ENCODE measurements at regions of chr5 and their contacts with region 1.

Region 1: DNA sequence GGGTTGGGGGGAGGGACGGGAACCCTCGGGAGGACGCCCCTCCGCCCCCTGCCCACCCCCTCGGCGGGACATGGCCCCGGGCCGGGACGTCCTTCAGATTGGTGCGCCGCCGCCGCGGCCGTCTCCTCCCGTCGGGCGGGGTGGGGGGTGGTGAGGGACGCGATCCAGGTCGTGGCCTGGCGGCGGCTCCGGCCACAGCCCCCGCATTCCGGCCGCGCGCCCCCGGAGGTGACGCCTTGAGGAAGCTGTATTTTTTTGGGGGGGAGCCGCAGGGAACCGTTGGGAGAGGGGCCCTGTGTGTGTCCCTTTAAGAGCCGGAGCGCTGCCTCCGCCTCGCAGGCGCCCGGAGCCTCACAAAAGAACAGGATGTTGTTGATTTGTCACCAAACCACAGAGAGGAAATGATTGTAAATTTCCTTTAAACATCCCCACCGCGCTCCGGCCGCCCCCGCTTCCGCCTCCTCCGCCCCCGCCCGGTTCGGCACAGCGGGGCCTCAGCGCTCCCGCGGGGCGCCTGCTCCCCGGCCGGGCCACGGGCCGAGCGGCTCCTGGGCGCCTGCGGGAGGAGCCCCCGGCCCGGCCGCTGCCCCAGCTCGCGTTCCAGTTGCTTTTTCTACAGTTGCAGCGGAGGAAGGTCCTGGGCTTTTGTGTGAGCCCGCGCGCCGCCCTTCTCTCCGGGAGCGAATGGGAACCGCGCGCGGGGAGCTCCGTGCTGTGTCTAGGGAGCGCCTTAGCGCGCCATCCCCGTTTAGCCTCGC is 32.1 kb upstream of the SPRY4 start:
- DNase-seq: peak; percentile 86 to 91
- ATAC-seq: peak; percentile 83 to 92 (median 90)
- H3K4me3 ChIP-seq: peak overlapping the region; percentile 68
- H3K4me3 Mint-ChIP-seq: peak overlapping the region; percentile 95
- H3K27ac ChIP-seq: peak overlapping the region; percentile 88
- H3K27ac Mint-ChIP-seq: peak overlapping the region; percentile 90 to 93
- H3K4me1 ChIP-seq: peaks cover 24% of the 10 kb centered on the region
- H3K4me1 Mint-ChIP-seq: peaks cover 13 to 33% of the 10 kb centered on the region in 2 donors
- H3K27me3 ChIP-seq: no peaks in the 10 kb centered on the region
- H3K27me3 Mint-ChIP-seq: no peaks in the 10 kb centered on the region
- CTCF ChIP-seq: no peak

Region 2: DNA sequence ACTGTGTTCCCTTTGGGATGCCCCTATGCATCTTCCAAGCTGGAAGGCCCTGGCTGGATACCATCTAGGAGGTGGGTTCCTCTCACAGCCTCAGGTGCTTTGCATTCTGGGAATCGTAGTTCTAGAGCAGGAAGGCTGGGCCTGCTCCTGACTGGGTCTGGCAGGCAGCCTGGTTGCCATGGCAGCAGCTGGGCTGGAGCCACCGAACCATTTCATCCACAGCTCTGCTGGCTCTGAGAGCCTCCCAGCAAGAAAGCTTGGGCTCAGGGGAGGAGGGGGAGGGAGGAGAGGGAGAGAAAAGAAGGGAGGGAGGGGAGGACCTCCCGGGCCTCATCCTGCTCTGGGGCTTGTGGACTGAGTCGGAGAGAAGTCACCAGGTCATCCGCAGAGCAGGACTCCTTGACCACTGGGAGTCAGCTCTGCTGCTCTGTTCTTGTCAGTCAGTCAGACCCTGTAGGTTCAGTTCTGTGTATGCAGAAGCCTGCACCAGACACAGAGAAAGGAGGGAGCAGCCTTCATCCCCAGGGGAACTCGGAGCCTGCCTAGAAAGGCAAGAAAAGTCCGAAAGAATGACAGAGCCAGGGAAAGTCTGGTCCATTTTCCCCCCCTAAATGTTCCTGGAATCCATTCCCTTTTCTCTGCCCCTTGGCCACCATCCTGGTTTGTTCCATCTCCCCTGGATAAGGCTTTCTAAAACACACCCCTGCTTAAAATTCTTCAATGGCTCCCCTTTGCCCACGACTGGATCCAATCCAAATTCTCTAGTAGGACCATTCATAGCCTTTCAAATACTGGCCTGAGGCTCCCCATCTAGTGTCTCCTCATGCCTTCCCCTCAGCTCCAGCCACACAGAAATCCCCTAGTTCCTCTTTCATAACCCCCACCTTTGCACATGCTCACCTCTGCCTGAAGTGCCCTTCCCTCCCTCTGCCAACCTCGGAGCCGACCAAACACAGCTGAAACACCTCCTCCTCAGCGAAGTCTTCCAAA is 609.4 kb before region 1 on chr5:
- intact Hi-C with region 1: no loop called
- DNase-seq: no peak
- ATAC-seq: no peak
- H3K4me3 ChIP-seq: no peak overlapping the region
- H3K4me3 Mint-ChIP-seq: no peak overlapping the region
- H3K27ac ChIP-seq: no peak overlapping the region
- H3K27ac Mint-ChIP-seq: no peak overlapping the region
- H3K4me1 ChIP-seq: no peaks in the 10 kb centered on the region
- H3K4me1 Mint-ChIP-seq: no peaks in the 10 kb centered on the region
- H3K27me3 ChIP-seq: peaks cover 7% of the 10 kb centered on the region
- H3K27me3 Mint-ChIP-seq: peaks cover 47 to 53% of the 10 kb centered on the region in 2 donors
- CTCF ChIP-seq: no peak

Region 3: DNA sequence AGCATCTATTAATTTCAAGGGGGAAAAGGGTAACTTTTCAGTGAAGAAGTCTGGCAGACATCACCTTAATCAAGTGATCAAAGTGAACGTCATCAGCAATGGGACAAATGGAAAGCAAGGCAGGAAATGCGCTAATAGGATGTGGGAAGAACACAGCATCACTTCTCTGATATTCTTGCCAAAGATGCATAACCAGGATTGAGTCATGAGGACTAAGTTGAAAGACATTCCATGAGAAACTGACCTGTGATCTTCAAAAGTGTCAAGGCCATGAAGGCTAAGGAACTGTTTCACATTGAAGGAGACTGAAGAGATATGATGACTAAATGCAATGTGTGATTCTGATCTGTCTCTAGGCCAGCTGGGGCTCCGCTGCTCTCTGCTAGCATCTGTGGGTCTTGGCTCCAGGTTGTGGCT is 155.4 kb before region 1 on chr5:
- intact Hi-C with region 1: no loop called
- DNase-seq: no peak
- ATAC-seq: no peak
- H3K4me3 ChIP-seq: no peak overlapping the region
- H3K4me3 Mint-ChIP-seq: no peak overlapping the region
- H3K27ac ChIP-seq: no peak overlapping the region
- H3K27ac Mint-ChIP-seq: no peak overlapping the region
- H3K4me1 ChIP-seq: no peaks in the 10 kb centered on the region
- H3K4me1 Mint-ChIP-seq: no peaks in the 10 kb centered on the region
- H3K27me3 ChIP-seq: no peaks in the 10 kb centered on the region
- H3K27me3 Mint-ChIP-seq: peaks cover 7% of the 10 kb centered on the region in 2 donors
- CTCF ChIP-seq: no peak

Region 4: DNA sequence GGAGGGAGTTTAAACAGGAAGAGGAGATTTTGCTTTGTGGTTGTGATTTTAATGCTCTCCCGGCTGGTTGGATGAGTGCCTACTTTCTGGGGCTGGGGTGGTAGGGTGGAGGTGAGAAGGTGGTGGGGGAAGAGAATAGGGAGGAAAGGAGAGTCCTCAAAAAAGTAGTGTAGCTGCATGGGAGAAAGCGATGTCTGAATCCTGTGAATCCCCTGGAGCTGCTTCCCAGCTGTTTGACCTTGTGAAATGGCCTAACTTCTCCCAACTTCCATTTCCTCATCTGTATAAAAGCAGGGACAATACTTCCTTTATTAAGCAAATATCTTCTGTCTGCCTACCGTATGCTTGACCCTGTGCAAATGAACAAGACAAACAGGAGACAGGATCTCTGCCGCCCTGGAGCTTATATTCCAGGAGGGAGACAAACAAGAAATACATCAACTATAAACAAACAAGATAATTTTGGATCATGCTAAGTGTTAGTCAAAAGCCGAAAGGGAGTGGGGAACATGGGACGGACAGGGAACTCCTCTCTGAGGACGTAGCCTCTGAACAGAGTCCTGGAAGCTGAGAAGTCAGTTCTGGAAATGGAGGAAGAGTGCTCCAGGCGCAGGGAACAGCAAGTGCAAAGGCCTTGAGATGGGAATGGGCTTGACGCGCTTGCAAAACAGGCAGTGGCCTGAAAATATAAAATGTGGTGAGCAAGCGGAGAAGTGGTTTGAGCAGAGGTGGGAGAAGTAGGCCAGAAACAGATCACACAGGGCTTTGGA is 135.6 kb before region 1 on chr5:
- intact Hi-C with region 1: loop called (anchors 5 kb)
- DNase-seq: no peak
- ATAC-seq: no peak
- H3K4me3 ChIP-seq: no peak overlapping the region
- H3K4me3 Mint-ChIP-seq: no peak overlapping the region
- H3K27ac ChIP-seq: no peak overlapping the region
- H3K27ac Mint-ChIP-seq: peak overlapping the region in 1 of 2 donors; percentile 21
- H3K4me1 ChIP-seq: peaks cover 31% of the 10 kb centered on the region
- H3K4me1 Mint-ChIP-seq: peaks cover 0 to 32% of the 10 kb centered on the region in 2 donors
- H3K27me3 ChIP-seq: no peaks in the 10 kb centered on the region
- H3K27me3 Mint-ChIP-seq: peaks cover 9 to 18% of the 10 kb centered on the region in 2 donors
- CTCF ChIP-seq: no peak

Region 5: DNA sequence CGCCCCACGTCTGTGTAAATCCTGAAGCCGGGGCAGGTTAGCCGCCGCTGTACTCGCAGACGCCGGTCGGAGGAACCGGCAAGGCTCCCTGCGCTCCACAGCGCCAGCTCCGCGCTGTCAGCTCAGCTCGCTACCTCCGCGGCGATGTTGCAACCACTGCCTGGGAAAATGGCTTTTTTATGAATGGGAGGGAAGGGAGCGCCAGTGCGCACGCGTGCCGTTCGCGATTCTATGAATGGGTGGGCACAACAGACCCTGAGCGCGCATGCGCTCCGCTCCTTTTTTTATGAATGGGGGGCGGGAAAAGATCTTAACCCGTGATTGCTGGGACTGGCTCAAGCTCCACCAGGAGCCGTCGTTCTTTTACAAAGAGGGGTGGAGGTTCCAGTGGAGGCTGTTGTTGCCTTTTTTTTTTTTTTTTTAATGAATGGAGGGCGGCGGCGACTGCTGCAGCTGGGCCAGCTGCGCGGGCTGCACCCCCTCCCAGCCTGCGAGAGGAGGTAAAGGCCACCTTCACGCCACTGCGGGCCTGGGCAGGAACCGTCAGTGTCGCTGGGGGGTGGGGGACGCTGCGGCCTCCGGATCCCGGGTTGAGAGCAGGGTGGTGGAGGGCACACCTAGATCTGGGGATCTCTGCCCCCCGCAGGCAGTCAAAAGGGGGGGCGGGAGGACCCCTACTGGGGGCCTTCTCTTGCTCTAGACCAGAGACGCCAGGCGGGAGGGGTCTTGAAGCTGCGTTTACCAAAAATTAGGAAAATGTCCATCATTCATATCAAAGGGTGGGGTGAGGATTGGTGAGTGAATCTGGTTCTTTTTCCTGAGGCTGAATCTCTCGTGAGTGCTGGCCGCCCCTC is 31.8 kb before region 1 on chr5 and contains the start of gene SPRY4:
- intact Hi-C with region 1: loop called (anchors 2 kb)
- DNase-seq: peak; percentile 65 to 87
- ATAC-seq: peak; percentile 71 to 79 (median 76)
- H3K4me3 ChIP-seq: peak within 1 kb of the TSS; percentile 63
- H3K4me3 Mint-ChIP-seq: peak within 1 kb of the TSS; percentile 87
- H3K27ac ChIP-seq: no peak within 1 kb of the TSS
- H3K27ac Mint-ChIP-seq: peak within 1 kb of the TSS; percentile 50 to 69
- H3K4me1 ChIP-seq: peaks cover 32% of the 10 kb centered on the region
- H3K4me1 Mint-ChIP-seq: peaks cover 27 to 45% of the 10 kb centered on the region in 2 donors
- H3K27me3 ChIP-seq: peaks cover 38% of the 10 kb centered on the region
- H3K27me3 Mint-ChIP-seq: peaks cover 42 to 46% of the 10 kb centered on the region in 2 donors
- CTCF ChIP-seq: no peak
- total RNA-seq, gene SPRY4: 0.20 to 1.3 (median 0.40) TPM

Region 6: DNA sequence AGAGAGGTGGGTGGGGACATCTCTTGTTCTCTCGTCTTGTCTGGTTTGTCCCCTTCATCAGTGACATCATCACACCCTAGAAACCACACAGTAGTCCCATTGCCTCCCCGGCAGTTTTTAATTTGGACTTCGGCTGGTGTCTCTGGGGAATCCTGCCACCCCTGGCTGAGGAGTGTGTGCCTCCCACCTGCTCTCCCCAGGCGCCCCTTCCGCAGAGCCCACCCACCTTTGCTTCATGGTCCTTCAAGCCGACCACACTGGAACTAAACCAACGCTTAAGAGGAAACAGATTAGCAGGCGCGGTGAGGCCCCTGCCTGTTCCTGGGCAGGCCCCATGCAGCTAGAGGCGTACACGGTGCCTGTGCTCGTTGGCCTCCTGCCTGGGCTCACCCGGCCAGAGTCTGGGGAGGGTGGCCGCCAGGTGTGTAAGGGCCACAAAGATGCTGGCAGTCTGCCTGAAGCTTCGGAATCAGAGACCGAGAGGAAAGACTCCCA is 75.5 kb after region 1 on chr5:
- intact Hi-C with region 1: loop called (anchors 2 kb)
- DNase-seq: peak; percentile 27 to 63
- ATAC-seq: peak; percentile 57 to 72 (median 69)
- H3K4me3 ChIP-seq: peak overlapping the region; percentile 4
- H3K4me3 Mint-ChIP-seq: peak overlapping the region; percentile 77
- H3K27ac ChIP-seq: peak overlapping the region; percentile 85
- H3K27ac Mint-ChIP-seq: peak overlapping the region; percentile 87 to 91
- H3K4me1 ChIP-seq: peaks cover 53% of the 10 kb centered on the region
- H3K4me1 Mint-ChIP-seq: peaks cover 32 to 37% of the 10 kb centered on the region in 2 donors
- H3K27me3 ChIP-seq: no peaks in the 10 kb centered on the region
- H3K27me3 Mint-ChIP-seq: no peaks in the 10 kb centered on the region
- CTCF ChIP-seq: no peak

Measured in natural killer cell (primary cell).